ENCODE measurements at regions of chr17 and their contacts with region 1.

Region 1: GRCh38 chr17:30796016-30796415 is 28.5 kb downstream of the CRLF3 start:
- DNase-seq: no peak
- H3K4me3 Mint-ChIP-seq: no peak overlapping the region
- H3K27ac Mint-ChIP-seq: peak overlapping the region; percentile 80
- H3K4me1 Mint-ChIP-seq: peaks cover 14% of the 10 kb centered on the region
- H3K27me3 Mint-ChIP-seq: no peaks in the 10 kb centered on the region

Region 2: DNA sequence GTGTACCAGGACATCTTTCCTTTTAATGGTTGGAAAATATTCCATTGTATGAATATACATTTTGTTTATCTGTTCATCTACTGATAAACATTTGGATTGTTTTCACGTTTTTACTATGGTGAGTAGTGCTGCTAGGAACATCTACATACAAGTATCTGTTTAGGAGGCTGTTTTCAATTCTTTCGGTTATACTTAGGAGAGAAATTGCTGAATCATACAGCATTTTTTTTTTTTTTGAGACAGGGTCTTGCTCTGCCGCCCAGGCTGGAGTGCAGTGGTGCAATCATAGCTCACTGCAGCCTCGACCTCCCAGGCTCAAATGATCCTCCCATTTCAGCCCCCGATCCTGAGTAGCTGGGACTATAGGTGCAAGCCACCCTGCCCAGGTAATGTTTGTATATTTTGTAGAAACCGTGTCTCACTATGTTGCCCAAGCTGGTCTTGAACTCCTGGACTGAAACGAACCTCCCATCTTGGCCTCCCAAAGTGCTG is 94.5 kb before region 1 on chr17:
- intact Hi-C with region 1: no loop called
- DNase-seq: no peak
- H3K4me3 Mint-ChIP-seq: no peak overlapping the region
- H3K27ac Mint-ChIP-seq: no peak overlapping the region
- H3K4me1 Mint-ChIP-seq: peaks cover 5% of the 10 kb centered on the region
- H3K27me3 Mint-ChIP-seq: peaks cover 52% of the 10 kb centered on the region

Region 3: GRCh38 chr17:30780343-30780742 is 15.7 kb before region 1 on chr17:
- intact Hi-C with region 1: loop called (anchors 2 kb)
- DNase-seq: no peak
- H3K4me3 Mint-ChIP-seq: no peak overlapping the region
- H3K27ac Mint-ChIP-seq: peak overlapping the region; percentile 83
- H3K4me1 Mint-ChIP-seq: peaks cover 14% of the 10 kb centered on the region
- H3K27me3 Mint-ChIP-seq: no peaks in the 10 kb centered on the region

Region 4: DNA sequence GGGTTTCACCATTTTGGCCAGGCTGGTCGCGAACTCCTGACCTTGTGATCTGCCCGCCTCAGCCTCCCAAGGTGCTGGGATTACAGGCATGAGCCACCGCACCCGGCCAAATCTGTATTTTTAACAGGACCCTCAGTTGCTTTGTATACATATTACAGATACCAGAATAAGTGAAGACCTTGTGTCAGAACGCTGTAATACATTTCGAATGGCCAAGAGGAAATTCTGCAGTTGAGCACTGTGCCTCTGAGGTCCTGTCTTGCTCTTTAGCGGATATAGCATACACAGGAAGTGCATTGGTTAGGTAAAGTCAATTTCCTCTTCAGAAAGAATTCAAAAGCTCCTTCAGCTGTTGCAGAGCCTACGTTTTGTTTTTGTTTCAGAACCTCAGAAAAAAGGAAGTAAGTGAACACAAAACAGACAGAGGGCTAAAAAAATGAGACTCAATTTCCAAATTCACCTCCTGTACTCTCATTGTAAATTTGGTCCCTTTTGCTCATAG is 12.8 kb after region 1 on chr17:
- intact Hi-C with region 1: loop called (anchors 1 kb)
- DNase-seq: peak; percentile 50
- H3K4me3 Mint-ChIP-seq: peak overlapping the region; percentile 83
- H3K27ac Mint-ChIP-seq: peak overlapping the region; percentile 94
- H3K4me1 Mint-ChIP-seq: peaks cover 71% of the 10 kb centered on the region
- H3K27me3 Mint-ChIP-seq: no peaks in the 10 kb centered on the region

Region 5: GRCh38 chr17:30858561-30859245 is 62.7 kb after region 1 on chr17:
- intact Hi-C with region 1: no loop called
- DNase-seq: no peak
- H3K4me3 Mint-ChIP-seq: no peak overlapping the region
- H3K27ac Mint-ChIP-seq: no peak overlapping the region
- H3K4me1 Mint-ChIP-seq: no peaks in the 10 kb centered on the region
- H3K27me3 Mint-ChIP-seq: no peaks in the 10 kb centered on the region

Region 6: GRCh38 chr17:31008374-31009041 is 212.5 kb after region 1 on chr17:
- intact Hi-C with region 1: no loop called
- DNase-seq: peak; percentile 43
- H3K4me3 Mint-ChIP-seq: peak overlapping the region; percentile 85
- H3K27ac Mint-ChIP-seq: peak overlapping the region; percentile 70
- H3K4me1 Mint-ChIP-seq: peaks cover 30% of the 10 kb centered on the region
- H3K27me3 Mint-ChIP-seq: peaks cover 16% of the 10 kb centered on the region